ENCODE measurements at regions of chr7 and their contacts with region 1.

Region 1: GRCh38 chr7:3493499-3493898 is 192.4 kb downstream of the SDK1 start:
- H3K4me3 ChIP-seq: no peak overlapping the region
- H3K27ac ChIP-seq: no peak overlapping the region
- H3K4me1 ChIP-seq: no peaks in the 10 kb centered on the region
- CTCF ChIP-seq: no peak

Region 2: GRCh38 chr7:2757904-2758672 is 735.4 kb before region 1 on chr7:
- CTCF ChIA-PET with region 1: no interaction called
- POLR2A ChIA-PET with region 1: no interaction called
- H3K4me3 ChIP-seq: no peak overlapping the region
- H3K27ac ChIP-seq: peak overlapping the region; percentile 45
- H3K4me1 ChIP-seq: peaks cover 6% of the 10 kb centered on the region
- CTCF ChIP-seq: no peak

Region 3: DNA sequence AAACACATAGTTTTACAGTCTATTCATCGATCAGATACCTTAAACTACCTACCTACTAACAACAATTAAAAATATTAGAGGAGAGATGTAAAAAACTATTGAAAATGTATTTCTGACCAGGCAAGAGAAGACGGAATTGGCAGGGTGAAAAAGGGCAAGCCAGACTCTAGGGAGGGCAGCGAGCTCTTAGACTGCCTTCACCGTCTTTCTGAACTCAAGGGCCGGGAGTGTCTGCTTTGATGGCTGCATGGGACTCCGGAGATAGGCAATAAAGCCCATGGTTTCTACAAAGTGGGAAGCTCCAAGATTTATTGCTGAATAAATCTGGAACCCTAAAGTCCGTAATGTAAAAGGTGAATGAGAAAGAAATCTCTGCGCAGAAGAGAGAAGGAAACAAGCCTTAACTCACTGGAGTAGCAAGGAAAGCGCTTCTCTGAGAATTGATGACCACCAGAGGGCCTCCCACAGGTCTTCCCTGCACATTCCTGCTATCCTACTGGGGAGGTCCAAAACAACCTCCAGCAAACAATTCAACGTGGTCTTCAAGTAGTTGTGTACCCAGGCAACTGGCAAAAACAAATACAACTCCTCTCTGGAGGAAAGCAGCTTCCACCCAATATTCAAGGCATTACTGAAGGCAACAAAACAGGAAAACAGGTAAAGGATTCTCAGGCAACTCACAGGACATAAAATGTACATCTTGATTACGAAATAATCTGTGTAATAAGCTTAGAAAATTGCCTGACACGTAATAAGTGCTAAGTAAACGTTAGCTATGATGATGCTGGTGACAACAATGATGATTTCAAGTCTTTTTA is 11.1 kb before region 1 on chr7:
- CTCF ChIA-PET with region 1: interaction called, 14 read pairs
- POLR2A ChIA-PET with region 1: no interaction called
- H3K4me3 ChIP-seq: no peak overlapping the region
- H3K27ac ChIP-seq: no peak overlapping the region
- H3K4me1 ChIP-seq: no peaks in the 10 kb centered on the region
- CTCF ChIP-seq: 0 out of 2 replicates have a peak, but pooled peaks have one; percentile 29

Region 4: DNA sequence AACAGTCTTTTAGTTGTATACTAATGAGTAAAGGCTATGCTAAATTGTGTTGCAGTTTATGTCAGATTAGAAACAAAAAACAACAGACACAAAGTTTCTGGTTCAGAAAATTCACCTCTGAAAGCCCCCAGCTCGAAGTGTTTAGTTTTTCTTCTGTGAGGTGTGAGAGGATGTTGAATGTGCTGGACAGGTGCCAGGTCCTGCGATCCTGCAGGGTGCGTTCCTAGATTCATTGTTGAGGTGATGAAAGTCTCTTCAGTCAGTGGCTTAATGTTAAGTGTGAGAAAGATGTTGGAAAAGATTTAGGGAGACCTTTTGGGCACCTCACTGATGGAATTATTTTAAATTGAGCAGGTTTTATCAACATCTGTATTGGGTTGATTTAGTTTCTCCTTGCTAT is 94.8 kb after region 1 on chr7:
- CTCF ChIA-PET with region 1: no interaction called
- POLR2A ChIA-PET with region 1: no interaction called
- H3K4me3 ChIP-seq: no peak overlapping the region
- H3K27ac ChIP-seq: no peak overlapping the region
- H3K4me1 ChIP-seq: peaks cover 11% of the 10 kb centered on the region; the same call in 1 of the 2 replicates
- CTCF ChIP-seq: no peak